H1 (cell line): ENCODE measurements at regions of chr19 and their contacts with region 1.

Region 1: GRCh38 chr19:3526507-3527244 is 12.3 kb upstream of the TEKTIP1 start:
- DNase-seq: no peak
- H3K4me3 ChIP-seq: no peak overlapping the region
- H3K27ac ChIP-seq: no peak overlapping the region
- H3K4me1 ChIP-seq: no peaks in the 10 kb centered on the region; a peak in 1 of 7 replicates
- H3K27me3 ChIP-seq: no peaks in the 10 kb centered on the region
- CTCF ChIP-seq: peak; percentile 9 to 48 (median 29); a peak in 2 of 4 replicates
- EP300 ChIP-seq: no peak
- POLR2A ChIP-seq: no peak
- RAD21 ChIP-seq: no peak

Region 2: DNA sequence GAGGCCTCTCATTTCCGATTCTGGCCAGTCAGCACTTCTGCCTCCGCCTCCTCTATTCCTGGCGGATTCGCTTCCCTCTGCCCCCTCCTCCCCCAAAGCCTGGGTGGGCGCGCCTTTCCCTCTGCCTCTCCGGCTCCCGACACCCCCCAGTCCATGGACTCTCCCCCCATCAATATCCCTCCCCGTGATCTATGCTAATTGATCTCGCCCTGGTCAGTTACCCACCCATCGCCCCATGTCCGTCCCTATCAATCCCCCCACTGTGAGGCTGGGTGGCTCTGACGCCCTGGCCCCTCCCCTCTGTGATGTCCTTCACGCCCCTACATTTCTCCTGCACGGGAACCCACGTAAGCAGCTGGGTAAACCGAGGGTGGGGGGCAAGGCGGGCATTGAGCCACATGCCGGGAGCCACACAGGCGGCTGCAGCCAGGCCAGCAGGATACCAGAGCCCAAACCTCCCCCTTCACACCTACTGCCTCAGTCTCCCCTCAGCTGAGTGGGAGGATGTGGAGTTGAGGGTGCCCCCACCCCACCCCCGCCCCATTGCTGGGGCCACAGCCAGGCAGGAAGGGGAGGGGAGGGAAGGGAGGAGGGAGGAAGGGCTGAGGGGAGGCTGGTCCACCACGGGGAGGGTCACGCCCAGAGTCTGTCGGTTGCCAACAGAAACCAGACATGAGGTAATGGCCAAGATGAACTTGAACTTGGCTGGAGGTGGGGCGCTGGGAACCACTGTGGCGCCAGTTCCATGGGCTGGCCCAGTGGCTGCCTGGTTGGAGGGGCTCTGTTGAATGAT is 67.4 kb before region 1 on chr19:
- CTCF ChIA-PET with region 1: no interaction called
- POLR2A ChIA-PET with region 1: no interaction called
- DNase-seq: no peak
- H3K4me3 ChIP-seq: peak overlapping the region in 1 of 4 experiments; percentile 48; a peak in 3 of 8 replicates
- H3K27ac ChIP-seq: no peak overlapping the region
- H3K4me1 ChIP-seq: peaks cover 0 to 24% (median 12%) of the 10 kb centered on the region in 4 experiments; a peak in 6 of 7 replicates
- H3K27me3 ChIP-seq: peaks cover 24 to 56% (median 46%) of the 10 kb centered on the region in 4 experiments
- CTCF ChIP-seq: no peak
- EP300 ChIP-seq: no peak
- POLR2A ChIP-seq: no peak
- RAD21 ChIP-seq: no peak

Region 3: DNA sequence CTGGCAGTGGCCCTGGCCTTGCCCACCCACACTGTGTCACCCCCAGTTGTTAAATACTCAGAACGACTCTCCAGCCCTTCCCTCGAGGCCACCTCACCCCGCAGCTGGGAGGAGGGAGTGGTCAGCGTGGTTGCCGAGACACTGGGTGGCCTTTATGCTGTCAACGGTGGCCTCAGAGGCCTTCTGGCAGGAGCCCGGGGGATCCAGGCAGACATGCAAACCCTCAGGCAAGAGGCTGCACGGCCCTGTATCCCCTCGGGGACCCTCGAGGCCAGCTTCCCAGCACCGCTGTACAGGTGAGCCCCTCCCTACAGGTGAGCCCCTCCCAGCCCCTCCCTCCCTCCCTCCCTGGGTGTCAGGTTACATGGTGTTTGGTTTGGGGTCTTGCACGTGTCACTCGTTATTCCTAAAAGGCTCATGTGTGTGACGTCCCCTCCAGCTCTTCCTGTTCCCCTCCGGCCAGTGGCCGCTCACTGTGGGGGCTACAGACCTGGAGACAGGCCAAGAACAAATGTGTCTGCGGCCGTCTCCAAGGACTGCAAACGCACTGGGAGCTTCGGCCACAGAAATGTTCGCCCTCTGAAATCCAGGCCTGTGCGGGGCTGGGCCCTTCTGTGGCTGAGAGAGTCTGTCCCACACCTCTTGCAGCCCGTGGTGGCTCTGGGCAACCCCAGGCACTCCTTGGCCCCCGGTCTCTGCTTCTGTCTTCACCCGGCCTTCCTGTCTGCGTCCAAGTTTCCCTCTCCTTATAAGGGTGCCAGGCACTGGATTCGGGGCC is 12.5 kb after region 1 on chr19 and contains the start of gene TEKTIP1:
- CTCF ChIA-PET with region 1: interaction called, 54 read pairs
- POLR2A ChIA-PET with region 1: interaction called, 30 read pairs
- DNase-seq: peak in 1 of 2 experiments; percentile 66
- H3K4me3 ChIP-seq: no peak within 1 kb of the TSS
- H3K27ac ChIP-seq: no peak within 1 kb of the TSS
- H3K4me1 ChIP-seq: peaks cover 3 to 11% (median 6%) of the 10 kb centered on the region in 4 experiments; a peak in 6 of 7 replicates
- H3K27me3 ChIP-seq: no peaks in the 10 kb centered on the region
- CTCF ChIP-seq: no peak
- EP300 ChIP-seq: no peak
- POLR2A ChIP-seq: no peak
- RAD21 ChIP-seq: no peak
- total RNA-seq, gene TEKTIP1: 1.0 and 1.1 TPM in 2 replicates